ENCODE measurements at regions of chr12 and their contacts with region 1.

Region 1: GRCh38 chr12:27243804-27244683 is at the start of gene STK38L:
- DNase-seq: peak; percentile 99
- ATAC-seq: peak; percentile 96
- H3K4me3 Mint-ChIP-seq: peak within 1 kb of the TSS; percentile 95
- H3K27ac Mint-ChIP-seq: peak within 1 kb of the TSS; percentile 98
- H3K4me1 Mint-ChIP-seq: peaks cover 48% of the 10 kb centered on the region
- H3K27me3 Mint-ChIP-seq: no peaks in the 10 kb centered on the region
- total RNA-seq, gene STK38L: 24.9 to 30.4 TPM

Region 2: DNA sequence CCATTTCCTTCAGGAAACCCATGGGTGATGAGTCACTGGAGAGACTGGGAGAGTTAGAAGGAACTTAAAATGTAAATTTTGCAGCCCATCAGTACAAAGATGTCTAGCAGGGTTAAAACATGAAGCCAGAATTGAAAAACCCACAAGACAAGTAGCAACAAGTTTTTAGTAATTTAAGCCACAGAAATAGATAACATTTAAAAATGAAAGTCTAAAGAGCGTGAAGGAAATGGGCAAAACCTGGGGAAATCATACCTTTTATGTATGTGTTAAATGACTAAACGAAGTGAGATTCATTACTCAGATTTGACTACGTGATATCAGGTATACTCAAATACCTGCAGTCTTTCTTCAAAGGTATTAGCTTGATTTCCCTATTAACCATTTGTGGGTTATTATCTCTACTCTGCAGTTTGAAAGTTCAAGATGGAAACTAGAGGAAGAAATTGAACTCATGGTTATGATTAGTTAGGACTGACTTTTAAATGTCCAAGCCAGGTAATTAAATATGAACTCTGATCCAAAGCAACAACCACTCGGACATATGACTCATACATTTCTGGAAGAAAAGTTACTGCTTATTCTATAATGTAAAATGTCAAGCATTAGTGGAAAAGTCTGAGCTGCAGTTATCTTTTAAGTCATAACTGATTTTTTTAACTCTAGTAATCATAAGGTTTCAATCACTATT is 495.2 kb before region 1 on chr12:
- CTCF ChIA-PET with region 1: interaction called, 3 read pairs
- POLR2A ChIA-PET with region 1: no interaction called
- intact Hi-C with region 1: loop called in 1 of 2 experiments (anchors 10 kb)
- DNase-seq: no peak
- ATAC-seq: peak; percentile 70
- H3K4me3 Mint-ChIP-seq: peak overlapping the region; percentile 30
- H3K27ac Mint-ChIP-seq: peak overlapping the region; percentile 83
- H3K4me1 Mint-ChIP-seq: peaks cover 75% of the 10 kb centered on the region
- H3K27me3 Mint-ChIP-seq: no peaks in the 10 kb centered on the region

Region 3: DNA sequence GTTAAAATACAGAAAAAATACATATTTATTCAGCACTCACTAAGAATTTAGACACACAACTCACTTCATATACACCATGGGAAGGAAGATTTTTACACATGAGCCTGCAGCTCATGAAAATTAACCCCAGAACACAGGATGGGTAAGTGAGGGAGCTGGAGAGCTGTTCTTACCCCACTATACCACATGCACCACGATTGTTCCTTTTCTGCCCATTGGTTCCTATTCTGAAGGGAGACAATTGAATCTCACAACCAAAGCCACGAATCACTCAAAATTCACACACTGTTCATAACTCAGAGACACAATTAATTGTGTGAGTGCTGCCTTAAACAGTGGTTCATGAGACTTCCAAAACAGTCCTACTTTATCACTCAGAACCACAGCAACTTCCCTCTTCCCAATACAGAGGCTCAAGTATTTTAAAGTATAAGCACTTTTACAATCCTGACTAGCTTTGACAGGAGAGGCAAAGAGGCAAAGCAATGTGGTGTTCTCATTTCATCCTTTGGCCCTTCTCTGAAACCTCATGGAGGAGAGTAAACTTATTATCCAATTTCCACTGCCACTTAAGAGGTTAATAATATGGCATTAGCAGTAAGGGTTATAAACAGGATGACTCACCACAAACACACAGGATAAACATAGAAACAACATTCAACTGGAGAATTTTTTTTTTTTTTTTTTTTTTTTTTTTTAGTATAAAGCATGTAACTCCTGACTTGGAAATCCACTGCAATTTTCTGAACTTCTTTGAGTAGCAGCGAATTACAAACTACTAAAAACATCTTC is 470.5 kb before region 1 on chr12:
- CTCF ChIA-PET with region 1: no interaction called
- POLR2A ChIA-PET with region 1: no interaction called
- intact Hi-C with region 1: no loop called
- DNase-seq: no peak
- ATAC-seq: no peak
- H3K4me3 Mint-ChIP-seq: no peak overlapping the region
- H3K27ac Mint-ChIP-seq: no peak overlapping the region
- H3K4me1 Mint-ChIP-seq: peaks cover 8% of the 10 kb centered on the region
- H3K27me3 Mint-ChIP-seq: no peaks in the 10 kb centered on the region

Region 4: DNA sequence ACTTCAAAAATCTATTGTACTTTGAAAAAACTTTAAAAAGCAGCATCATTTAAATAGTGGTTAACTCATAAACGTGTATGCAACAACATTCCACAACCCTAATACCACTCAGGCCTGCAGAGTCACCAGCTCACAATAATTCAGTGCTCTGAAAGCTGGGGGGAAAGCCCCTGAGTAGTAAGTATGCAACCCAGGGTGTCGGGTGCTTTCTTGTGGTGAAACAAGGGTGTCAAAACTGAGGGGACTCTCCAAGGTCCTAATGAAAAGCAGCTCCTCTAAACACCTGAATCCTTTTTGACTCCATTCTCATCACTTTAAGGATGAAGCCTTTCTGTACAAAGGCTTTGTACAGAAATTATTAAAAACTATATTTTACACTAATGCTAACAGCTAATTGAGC is 272.1 kb before region 1 on chr12:
- CTCF ChIA-PET with region 1: no interaction called
- POLR2A ChIA-PET with region 1: interaction called, 14 read pairs
- intact Hi-C with region 1: no loop called
- DNase-seq: peak; percentile 83
- ATAC-seq: peak; percentile 100
- H3K4me3 Mint-ChIP-seq: no peak overlapping the region
- H3K27ac Mint-ChIP-seq: no peak overlapping the region
- H3K4me1 Mint-ChIP-seq: peaks cover 22% of the 10 kb centered on the region
- H3K27me3 Mint-ChIP-seq: no peaks in the 10 kb centered on the region

Region 5: GRCh38 chr12:27207615-27208413 is 36.2 kb before region 1 on chr12:
- CTCF ChIA-PET with region 1: no interaction called
- POLR2A ChIA-PET with region 1: no interaction called
- intact Hi-C with region 1: loop called in 1 of 2 experiments (anchors 5 kb)
- DNase-seq: peak; percentile 74
- ATAC-seq: peak; percentile 99
- H3K4me3 Mint-ChIP-seq: no peak overlapping the region
- H3K27ac Mint-ChIP-seq: peak overlapping the region; percentile 65
- H3K4me1 Mint-ChIP-seq: peaks cover 25% of the 10 kb centered on the region
- H3K27me3 Mint-ChIP-seq: no peaks in the 10 kb centered on the region

Region 6: GRCh38 chr12:27305673-27306456 is 61.8 kb after region 1 on chr12:
- CTCF ChIA-PET with region 1: interaction called, 11 read pairs
- POLR2A ChIA-PET with region 1: no interaction called
- intact Hi-C with region 1: no loop called
- DNase-seq: no peak
- ATAC-seq: no peak
- H3K4me3 Mint-ChIP-seq: no peak overlapping the region
- H3K27ac Mint-ChIP-seq: no peak overlapping the region
- H3K4me1 Mint-ChIP-seq: peaks cover 5% of the 10 kb centered on the region
- H3K27me3 Mint-ChIP-seq: no peaks in the 10 kb centered on the region

Region 7: DNA sequence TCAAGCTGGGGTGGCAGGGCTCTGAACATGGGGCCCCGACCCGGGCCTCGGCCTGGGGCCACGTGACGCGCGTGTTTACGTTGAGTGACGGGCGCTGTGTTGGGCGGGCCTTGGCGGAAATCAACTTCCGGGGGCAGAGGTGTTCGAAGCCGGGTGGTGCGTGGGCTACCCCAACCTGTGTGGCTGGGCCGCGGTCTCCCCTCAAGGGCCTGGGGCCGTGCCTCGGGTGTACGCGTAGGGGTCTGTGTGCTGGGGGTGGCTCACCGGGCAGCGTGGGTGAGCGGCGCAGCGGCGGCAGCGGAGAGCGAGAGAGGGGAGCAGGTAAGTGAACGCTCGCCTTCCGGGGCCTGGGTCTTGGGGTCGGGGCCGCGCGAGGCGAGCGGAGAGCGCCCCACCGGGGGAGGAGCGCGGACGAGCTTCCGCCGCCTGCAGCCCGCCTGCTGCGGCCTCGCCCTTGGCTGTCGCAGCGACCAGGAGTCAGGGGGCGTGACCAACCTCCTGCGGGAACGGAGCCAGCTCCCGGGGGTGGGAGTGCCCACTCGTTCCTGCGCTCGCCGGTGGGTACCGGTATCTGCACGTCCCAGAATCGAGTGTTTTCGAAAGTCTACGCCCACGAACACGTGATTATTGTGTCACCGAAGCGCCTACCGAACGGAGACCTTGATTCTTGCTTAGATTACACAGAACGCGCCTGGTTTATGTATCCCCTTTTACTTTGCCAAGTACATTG is 946.4 kb after region 1 on chr12 and contains the start of gene CCDC91:
- CTCF ChIA-PET with region 1: no interaction called
- POLR2A ChIA-PET with region 1: no interaction called
- intact Hi-C with region 1: loop called in 1 of 2 experiments (anchors 10 kb)
- DNase-seq: peak; percentile 93
- ATAC-seq: peak; percentile 83
- H3K4me3 Mint-ChIP-seq: peak within 1 kb of the TSS; percentile 89
- H3K27ac Mint-ChIP-seq: peak within 1 kb of the TSS; percentile 99
- H3K4me1 Mint-ChIP-seq: peaks cover 65% of the 10 kb centered on the region
- H3K27me3 Mint-ChIP-seq: no peaks in the 10 kb centered on the region
- total RNA-seq, gene CCDC91: 13.9 to 16.0 TPM

Measured in activated CD4-positive, alpha-beta T cell treated with anti-CD3 and anti-CD28 coated beads for 36 hours (primary cell).